Heart left ventricle (tissue), 16 donors: ENCODE measurements at regions of chr12 and their contacts with region 1.

Region 1: DNA sequence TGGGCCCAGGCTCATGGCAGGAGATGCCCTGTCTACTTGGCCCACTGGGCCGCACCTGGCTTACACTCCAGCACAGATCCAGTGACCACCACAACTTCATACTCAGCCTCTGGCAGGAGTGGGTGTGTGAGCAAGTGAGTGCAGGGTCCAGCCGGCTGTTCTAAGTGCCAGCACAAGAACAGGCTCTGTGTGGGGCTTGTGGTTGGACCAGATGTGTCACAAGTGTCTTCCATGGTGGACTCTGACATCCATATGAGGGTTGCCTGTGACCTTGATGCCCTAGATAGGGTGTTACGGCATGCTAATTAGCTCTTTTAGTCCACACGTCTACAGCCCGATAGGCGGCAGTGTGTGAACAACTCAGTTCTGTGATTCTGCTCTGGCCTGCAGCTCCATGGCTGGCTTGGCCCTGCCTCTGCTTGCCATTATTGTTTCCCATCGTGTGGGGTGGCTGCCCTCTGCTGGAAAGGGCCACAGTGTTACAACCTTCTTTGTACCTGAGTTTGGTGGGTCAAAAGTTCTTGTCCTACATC is 1089.1 kb downstream of the SLC6A15 start:
- DNase-seq: peak in 4 of 5 donors; percentile 24 to 51 (median 44)
- ATAC-seq: peak in 3 of 4 donors; percentile 79 to 84 (median 81)
- H3K4me3 ChIP-seq: no peak overlapping the region
- H3K27ac ChIP-seq: no peak overlapping the region
- H3K4me1 ChIP-seq: peaks cover 0 to 5% (median 0%) of the 10 kb centered on the region in 12 donors
- H3K27me3 ChIP-seq: no peaks in the 10 kb centered on the region
- CTCF ChIP-seq: peak in 11 of 12 donors; percentile 7 to 55 (median 37)
- POLR2A ChIP-seq: no peak

Region 2: DNA sequence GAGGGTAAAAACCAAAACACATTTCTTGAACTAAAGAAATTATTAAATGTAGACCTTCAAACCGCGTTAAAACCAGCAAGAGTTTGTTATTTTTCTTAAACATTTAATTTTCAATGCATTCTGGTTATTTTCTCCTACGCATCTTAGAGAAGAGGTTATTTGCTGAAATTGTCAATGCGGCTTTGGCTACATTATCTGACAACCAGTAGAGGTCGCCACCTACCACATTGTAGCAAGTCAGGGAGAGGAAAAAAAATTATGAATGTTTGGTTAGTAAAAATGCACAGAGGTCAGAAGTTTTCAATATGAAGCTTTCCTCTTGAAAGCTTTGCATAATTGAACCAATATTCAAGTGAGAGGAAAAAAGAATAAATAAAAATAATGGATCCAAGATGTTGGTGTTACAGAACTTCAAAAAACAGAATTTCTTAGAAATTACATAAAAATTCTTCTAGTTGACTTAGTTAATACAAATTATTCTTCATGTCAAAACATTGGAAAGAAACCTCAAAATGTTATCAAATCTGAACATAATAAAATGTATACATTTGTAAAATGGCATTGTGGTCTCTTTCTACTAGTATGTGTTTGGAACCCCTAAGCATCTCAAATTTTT is 1296.2 kb before region 1 on chr12:
- intact Hi-C with region 1: loop called in 1 of 10 experiments (anchors 5 kb)
- DNase-seq: peak in 1 of 5 donors; percentile 17
- ATAC-seq: no peak
- H3K4me3 ChIP-seq: no peak overlapping the region
- H3K27ac ChIP-seq: no peak overlapping the region
- H3K4me1 ChIP-seq: no peaks in the 10 kb centered on the region
- H3K27me3 ChIP-seq: no peaks in the 10 kb centered on the region
- CTCF ChIP-seq: peak; percentile 60 to 89 (median 80)
- POLR2A ChIP-seq: no peak

Region 3: DNA sequence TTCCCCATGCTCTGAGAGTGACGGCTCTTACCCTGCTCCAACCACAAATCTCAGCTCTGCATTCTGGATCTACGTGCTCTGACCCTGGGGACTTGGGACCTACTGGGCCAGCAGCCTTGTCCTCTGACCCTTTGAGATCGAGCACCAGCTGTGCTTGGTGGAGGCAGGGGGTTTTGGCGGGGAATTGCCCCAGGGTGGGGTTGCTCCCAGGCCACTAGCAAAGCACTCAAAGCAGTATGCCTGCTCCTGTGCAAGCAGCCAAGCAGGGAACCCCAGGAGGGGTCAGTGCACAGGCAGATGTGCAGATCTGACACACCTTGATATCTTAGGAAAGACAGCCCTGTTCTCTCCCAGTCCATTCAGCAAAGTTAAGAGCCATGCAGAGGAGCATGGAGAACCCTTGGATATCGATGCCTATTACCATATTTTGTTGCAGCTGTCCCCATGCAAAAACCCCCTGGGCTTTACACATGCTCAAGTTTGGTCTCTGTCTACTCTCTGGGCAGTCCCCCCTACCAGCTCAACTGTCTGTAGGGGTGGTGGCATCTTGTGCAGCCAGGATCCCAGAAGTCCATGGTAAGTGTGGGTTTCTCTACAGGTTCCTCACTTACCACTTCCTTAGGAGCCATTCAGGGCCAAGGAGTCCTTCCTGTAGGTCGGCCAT is 817.8 kb before region 1 on chr12:
- intact Hi-C with region 1: loop called in 1 of 10 experiments (anchors 2 kb)
- DNase-seq: no peak
- ATAC-seq: no peak
- H3K4me3 ChIP-seq: no peak overlapping the region
- H3K27ac ChIP-seq: no peak overlapping the region
- H3K4me1 ChIP-seq: no peaks in the 10 kb centered on the region
- H3K27me3 ChIP-seq: no peaks in the 10 kb centered on the region
- CTCF ChIP-seq: no peak
- POLR2A ChIP-seq: no peak

Region 4: GRCh38 chr12:83462419-83462818 is 361.1 kb before region 1 on chr12:
- intact Hi-C with region 1: loop called in 1 of 10 experiments (anchors 10 kb)
- DNase-seq: no peak
- ATAC-seq: peak in 1 of 4 donors; percentile 39
- H3K4me3 ChIP-seq: no peak overlapping the region
- H3K27ac ChIP-seq: no peak overlapping the region
- H3K4me1 ChIP-seq: no peaks in the 10 kb centered on the region
- H3K27me3 ChIP-seq: no peaks in the 10 kb centered on the region
- CTCF ChIP-seq: peak in 1 of 12 donors; percentile 11
- POLR2A ChIP-seq: no peak